ENCODE measurements at regions of chr1 and their contacts with region 1.

Region 1: DNA sequence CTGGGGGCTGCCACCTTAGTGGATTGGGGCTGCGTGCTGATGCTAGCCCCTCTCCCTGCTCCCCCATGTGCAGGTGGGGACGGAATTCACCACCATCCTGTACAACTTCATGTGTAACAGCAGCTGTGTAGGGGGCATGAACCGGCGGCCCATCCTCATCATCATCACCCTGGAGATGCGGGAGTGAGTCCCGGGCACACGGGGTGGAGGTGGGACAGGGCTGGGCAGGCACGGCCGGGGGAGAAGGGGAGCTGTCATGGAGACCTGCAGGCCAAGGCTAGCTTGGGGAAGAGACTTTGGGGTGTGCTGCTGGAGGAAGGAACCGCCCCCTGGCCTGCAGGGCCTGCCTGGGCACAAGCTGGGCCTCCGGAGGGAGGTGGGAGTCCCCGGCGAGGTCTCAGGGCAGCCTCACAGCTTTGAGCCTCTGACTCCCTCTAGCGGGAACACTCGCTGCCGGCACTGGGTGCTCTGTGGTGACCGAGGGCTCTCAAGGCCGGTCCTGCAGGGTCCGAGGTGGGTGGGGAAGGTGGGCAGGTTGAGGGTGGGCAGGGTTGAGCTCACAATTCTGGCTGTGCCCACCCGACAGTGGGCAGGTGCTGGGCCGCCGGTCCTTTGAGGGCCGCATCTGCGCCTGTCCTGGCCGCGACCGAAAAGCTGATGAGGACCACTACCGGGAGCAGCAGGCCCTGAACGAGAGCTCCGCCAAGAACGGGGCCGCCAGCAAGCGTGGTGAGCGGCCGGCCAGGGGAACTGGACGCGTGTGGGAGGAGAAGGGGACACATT is 25.0 kb upstream of the CCDC27 start:
- DNase-seq: no peak
- ATAC-seq: no peak
- H3K4me3 ChIP-seq: no peak overlapping the region
- H3K4me3 Mint-ChIP-seq: no peak overlapping the region
- H3K27ac ChIP-seq: no peak overlapping the region
- H3K27ac Mint-ChIP-seq: no peak overlapping the region
- H3K4me1 ChIP-seq: no peaks in the 10 kb centered on the region
- H3K4me1 Mint-ChIP-seq: peaks cover 2% of the 10 kb centered on the region
- H3K27me3 ChIP-seq: peaks cover 0 to 3% (median 0%) of the 10 kb centered on the region in 4 experiments
- H3K27me3 Mint-ChIP-seq: peaks cover 3% of the 10 kb centered on the region
- CTCF ChIP-seq: peak; percentile 23

Region 2: DNA sequence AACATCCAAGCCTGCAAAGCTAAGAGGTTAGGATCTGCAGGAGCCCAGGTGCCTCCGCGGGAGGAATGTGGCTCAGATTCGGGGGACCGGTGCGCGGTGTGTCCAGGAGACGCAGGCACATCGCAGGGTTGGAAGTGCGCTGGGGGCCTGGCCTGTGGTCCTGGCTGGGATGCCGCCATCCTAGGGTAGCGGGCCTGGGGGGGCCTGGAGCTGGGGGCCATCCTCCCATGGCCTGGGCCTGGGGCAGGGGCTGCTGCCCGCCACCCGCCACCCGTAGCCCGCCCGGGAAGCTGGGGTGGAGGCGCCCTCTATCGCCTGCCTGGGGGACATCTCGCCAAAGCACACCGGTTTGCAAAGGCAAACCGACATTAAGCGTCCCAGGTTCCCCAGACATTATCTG is 443.4 kb before region 1 on chr1:
- CTCF ChIA-PET with region 1: no interaction called
- POLR2A ChIA-PET with region 1: no interaction called
- intact Hi-C with region 1: no loop called
- DNase-seq: no peak
- ATAC-seq: no peak
- H3K4me3 ChIP-seq: no peak overlapping the region
- H3K4me3 Mint-ChIP-seq: no peak overlapping the region
- H3K27ac ChIP-seq: no peak overlapping the region
- H3K27ac Mint-ChIP-seq: no peak overlapping the region
- H3K4me1 ChIP-seq: no peaks in the 10 kb centered on the region
- H3K4me1 Mint-ChIP-seq: no peaks in the 10 kb centered on the region
- H3K27me3 ChIP-seq: no peaks in the 10 kb centered on the region
- H3K27me3 Mint-ChIP-seq: no peaks in the 10 kb centered on the region
- CTCF ChIP-seq: peak; percentile 15

Region 3: DNA sequence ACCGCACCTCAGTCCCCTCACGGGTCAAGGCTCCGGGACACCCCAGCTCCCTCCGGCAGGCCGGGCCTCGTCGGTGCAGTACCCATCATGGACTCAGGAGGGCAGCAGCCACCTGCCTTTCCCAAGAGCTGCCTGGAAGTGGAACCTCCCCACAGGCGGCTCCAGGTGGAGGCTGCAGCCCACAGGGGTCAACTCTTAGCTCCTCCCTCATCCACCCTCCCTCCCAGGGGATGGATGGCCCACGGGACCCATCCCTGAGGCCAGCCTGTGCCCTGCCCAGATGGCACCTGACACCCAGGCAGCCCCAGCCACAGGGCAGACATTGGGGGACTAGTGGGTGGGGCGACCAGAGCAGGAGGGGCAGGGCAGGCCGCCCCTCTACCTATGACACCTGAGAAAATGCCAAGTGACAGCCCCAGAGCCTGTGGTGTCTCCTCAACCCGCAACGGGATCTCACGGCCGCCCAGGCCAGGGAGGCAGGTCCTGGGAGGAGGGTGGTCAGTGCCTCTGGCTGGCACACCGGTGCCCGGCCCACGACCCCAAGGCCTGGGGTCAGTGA is 274.0 kb before region 1 on chr1:
- CTCF ChIA-PET with region 1: interaction called, 35 read pairs
- POLR2A ChIA-PET with region 1: no interaction called
- intact Hi-C with region 1: loop called (anchors 1 kb)
- DNase-seq: peak; percentile 82
- ATAC-seq: peak; percentile 84
- H3K4me3 ChIP-seq: no peak overlapping the region
- H3K4me3 Mint-ChIP-seq: peak overlapping the region; percentile 71
- H3K27ac ChIP-seq: no peak overlapping the region
- H3K27ac Mint-ChIP-seq: no peak overlapping the region
- H3K4me1 ChIP-seq: peaks cover 16 to 20% of the 10 kb centered on the region in 2 donors
- H3K4me1 Mint-ChIP-seq: peaks cover 3% of the 10 kb centered on the region
- H3K27me3 ChIP-seq: peaks cover 0 to 44% (median 21%) of the 10 kb centered on the region in 4 experiments
- H3K27me3 Mint-ChIP-seq: peaks cover 26% of the 10 kb centered on the region
- CTCF ChIP-seq: peak; percentile 92

Region 4: DNA sequence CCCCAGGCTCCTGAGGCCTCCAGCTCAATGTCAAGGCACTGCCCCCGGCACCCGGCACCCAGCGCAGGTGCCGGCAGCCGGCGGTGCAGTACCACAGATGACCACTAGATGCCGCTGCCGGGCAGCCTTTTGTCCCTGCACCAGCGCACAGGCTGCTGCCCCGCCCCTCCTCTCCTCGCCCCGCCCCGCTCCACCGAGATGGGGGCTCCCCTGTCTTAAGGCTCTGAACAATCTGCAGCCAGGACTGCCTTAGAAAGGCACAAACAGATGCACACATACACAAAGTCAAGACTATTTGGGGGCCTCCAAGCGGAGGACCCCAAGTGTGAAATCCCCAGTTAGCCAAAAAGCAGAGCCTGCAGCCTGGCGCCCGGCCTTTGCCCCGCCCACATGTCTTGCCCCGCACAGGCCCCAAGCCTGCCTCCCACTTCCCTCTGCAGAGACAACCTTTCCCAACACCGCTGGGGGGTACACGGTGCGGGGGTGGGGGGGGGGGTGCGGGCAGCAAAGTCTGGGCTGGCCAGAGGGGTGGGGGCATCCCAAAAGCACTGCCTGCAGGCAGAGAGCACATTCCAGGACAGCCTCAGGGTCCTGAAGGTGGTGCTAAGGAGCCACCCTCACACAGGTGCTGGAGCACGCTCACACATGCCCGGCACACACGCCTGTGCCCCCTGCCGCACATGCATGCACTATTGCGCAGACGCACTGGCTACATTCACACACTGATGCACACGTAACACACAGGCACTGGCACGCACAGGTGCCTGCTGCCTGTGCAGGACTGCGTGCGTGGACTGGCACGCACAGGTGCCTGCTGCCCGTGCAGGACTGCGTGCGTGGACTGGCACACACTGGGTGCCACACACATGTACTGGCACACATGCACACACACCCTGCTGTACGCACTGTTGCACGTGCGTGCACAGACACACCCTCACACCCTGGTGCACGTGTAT is 235.7 kb before region 1 on chr1:
- CTCF ChIA-PET with region 1: interaction called, 11 read pairs
- POLR2A ChIA-PET with region 1: no interaction called
- intact Hi-C with region 1: no loop called
- DNase-seq: peak; percentile 89
- ATAC-seq: peak; percentile 98
- H3K4me3 ChIP-seq: peak overlapping the region in 3 of 5 experiments; percentile 12 to 37 (median 36)
- H3K4me3 Mint-ChIP-seq: peak overlapping the region; percentile 69
- H3K27ac ChIP-seq: no peak overlapping the region
- H3K27ac Mint-ChIP-seq: peak overlapping the region; percentile 10
- H3K4me1 ChIP-seq: peaks cover 0 to 7% of the 10 kb centered on the region in 2 donors
- H3K4me1 Mint-ChIP-seq: peaks cover 6% of the 10 kb centered on the region
- H3K27me3 ChIP-seq: no peaks in the 10 kb centered on the region
- H3K27me3 Mint-ChIP-seq: no peaks in the 10 kb centered on the region
- CTCF ChIP-seq: peak; percentile 100

Region 5: DNA sequence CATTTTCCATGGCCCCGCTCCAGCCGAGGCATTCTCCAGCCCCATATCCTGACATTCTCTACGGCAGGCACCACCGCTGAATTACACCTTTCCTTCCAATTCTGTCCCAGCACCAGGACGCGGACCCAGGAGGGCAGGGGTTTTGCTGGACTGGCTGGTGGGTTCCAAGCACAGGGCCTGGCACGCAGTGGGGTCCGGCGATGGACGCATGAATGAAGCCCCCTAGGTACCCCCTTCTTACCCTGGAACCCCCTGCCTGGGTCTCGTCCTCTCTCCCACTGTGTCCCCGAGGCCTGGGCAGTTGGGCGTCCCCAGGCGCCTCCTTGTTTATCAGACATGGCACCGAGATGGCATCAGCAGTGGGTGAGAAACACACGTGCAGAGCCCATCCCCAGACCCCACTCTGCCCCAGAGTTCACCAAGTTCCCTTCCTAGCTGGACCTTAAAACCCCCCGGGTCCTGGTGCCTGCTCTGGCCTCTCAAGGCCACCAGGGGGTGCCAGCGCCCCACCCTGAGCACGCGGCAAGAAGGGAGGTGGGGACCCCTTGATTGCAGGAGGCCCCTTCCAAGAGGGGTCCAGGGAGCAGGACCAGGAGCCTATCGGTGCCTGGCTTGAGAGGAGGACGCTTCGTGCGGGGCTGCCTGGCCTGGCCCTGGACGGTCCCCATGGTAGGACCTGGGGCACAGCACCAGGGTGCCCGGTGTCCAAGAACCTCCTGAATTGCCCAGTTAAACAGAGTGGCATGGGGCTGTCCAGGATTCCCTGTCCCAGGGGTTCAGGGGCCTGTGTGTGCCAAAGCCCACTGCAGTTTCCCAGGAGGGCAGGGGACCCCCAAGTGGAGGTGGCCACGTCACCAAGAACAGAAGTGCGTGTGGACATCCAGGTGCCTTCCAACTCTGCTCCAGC is 162.1 kb before region 1 on chr1:
- CTCF ChIA-PET with region 1: interaction called, 7 read pairs
- POLR2A ChIA-PET with region 1: no interaction called
- intact Hi-C with region 1: loop called (anchors 2 kb)
- DNase-seq: peak; percentile 67
- ATAC-seq: no peak
- H3K4me3 ChIP-seq: no peak overlapping the region
- H3K4me3 Mint-ChIP-seq: no peak overlapping the region
- H3K27ac ChIP-seq: no peak overlapping the region
- H3K27ac Mint-ChIP-seq: no peak overlapping the region
- H3K4me1 ChIP-seq: no peaks in the 10 kb centered on the region
- H3K4me1 Mint-ChIP-seq: no peaks in the 10 kb centered on the region
- H3K27me3 ChIP-seq: no peaks in the 10 kb centered on the region
- H3K27me3 Mint-ChIP-seq: peaks cover 3% of the 10 kb centered on the region
- CTCF ChIP-seq: peak; percentile 81

Region 6: GRCh38 chr1:3656450-3657095 is 70.7 kb before region 1 on chr1:
- CTCF ChIA-PET with region 1: interaction called, 10 read pairs
- POLR2A ChIA-PET with region 1: no interaction called
- intact Hi-C with region 1: no loop called
- DNase-seq: peak; percentile 23
- ATAC-seq: no peak
- H3K4me3 ChIP-seq: peak overlapping the region in 2 of 5 experiments; percentile 27 to 28
- H3K4me3 Mint-ChIP-seq: peak overlapping the region; percentile 73
- H3K27ac ChIP-seq: no peak overlapping the region
- H3K27ac Mint-ChIP-seq: peak overlapping the region; percentile 29
- H3K4me1 ChIP-seq: peaks cover 28 to 29% of the 10 kb centered on the region in 2 donors
- H3K4me1 Mint-ChIP-seq: peaks cover 21% of the 10 kb centered on the region
- H3K27me3 ChIP-seq: peaks cover 0 to 36% (median 21%) of the 10 kb centered on the region in 4 experiments
- H3K27me3 Mint-ChIP-seq: peaks cover 56% of the 10 kb centered on the region
- CTCF ChIP-seq: no peak

Region 7: GRCh38 chr1:3695326-3696217 is 31.7 kb before region 1 on chr1:
- CTCF ChIA-PET with region 1: interaction called, 10 read pairs
- POLR2A ChIA-PET with region 1: no interaction called
- intact Hi-C with region 1: loop called (anchors 2 kb)
- DNase-seq: peak; percentile 56
- ATAC-seq: peak; percentile 84
- H3K4me3 ChIP-seq: peak overlapping the region in 2 of 5 experiments; percentile 5 to 24
- H3K4me3 Mint-ChIP-seq: peak overlapping the region; percentile 71
- H3K27ac ChIP-seq: no peak overlapping the region
- H3K27ac Mint-ChIP-seq: no peak overlapping the region
- H3K4me1 ChIP-seq: peaks cover 0 to 11% of the 10 kb centered on the region in 2 donors
- H3K4me1 Mint-ChIP-seq: peaks cover 10% of the 10 kb centered on the region
- H3K27me3 ChIP-seq: peaks cover 0 to 5% (median 0%) of the 10 kb centered on the region in 4 experiments
- H3K27me3 Mint-ChIP-seq: peaks cover 11% of the 10 kb centered on the region
- CTCF ChIP-seq: peak; percentile 76

Region 8: DNA sequence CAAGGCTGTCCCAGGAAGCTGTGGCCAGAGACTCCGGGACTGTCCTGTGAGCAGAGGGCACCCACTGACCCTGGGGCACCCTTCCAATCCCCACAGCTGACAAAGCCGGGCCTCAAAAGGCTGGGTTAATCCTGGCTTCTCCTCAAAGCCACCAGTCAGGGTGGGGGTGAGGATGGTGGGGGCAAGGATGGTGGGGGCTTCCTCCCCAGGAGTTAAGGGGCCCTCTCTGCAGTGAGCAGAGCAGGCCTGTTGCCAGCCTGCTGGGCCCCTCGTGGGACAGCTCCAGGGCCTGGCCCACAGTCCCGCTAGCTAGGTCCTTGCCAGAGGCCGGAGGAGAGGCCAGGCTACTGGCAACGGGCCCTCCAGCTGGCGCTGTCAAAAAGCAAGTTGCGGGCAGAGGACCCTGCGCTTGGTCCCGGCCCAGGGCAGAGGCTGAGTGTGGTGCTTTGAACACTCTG is 12.9 kb before region 1 on chr1:
- CTCF ChIA-PET with region 1: interaction called, 12 read pairs
- POLR2A ChIA-PET with region 1: no interaction called
- intact Hi-C with region 1: no loop called
- DNase-seq: no peak
- ATAC-seq: no peak
- H3K4me3 ChIP-seq: no peak overlapping the region
- H3K4me3 Mint-ChIP-seq: no peak overlapping the region
- H3K27ac ChIP-seq: no peak overlapping the region
- H3K27ac Mint-ChIP-seq: no peak overlapping the region
- H3K4me1 ChIP-seq: peaks cover 0 to 3% of the 10 kb centered on the region in 2 donors
- H3K4me1 Mint-ChIP-seq: no peaks in the 10 kb centered on the region
- H3K27me3 ChIP-seq: peaks cover 0 to 17% (median 2%) of the 10 kb centered on the region in 4 experiments
- H3K27me3 Mint-ChIP-seq: peaks cover 16% of the 10 kb centered on the region
- CTCF ChIP-seq: no peak